Activated CD8-positive, alpha-beta T cell treated with anti-CD3 and anti-CD28 coated beads for 36 hours (primary cell): ENCODE measurements at regions of chr11 and their contacts with region 1.

Region 1: DNA sequence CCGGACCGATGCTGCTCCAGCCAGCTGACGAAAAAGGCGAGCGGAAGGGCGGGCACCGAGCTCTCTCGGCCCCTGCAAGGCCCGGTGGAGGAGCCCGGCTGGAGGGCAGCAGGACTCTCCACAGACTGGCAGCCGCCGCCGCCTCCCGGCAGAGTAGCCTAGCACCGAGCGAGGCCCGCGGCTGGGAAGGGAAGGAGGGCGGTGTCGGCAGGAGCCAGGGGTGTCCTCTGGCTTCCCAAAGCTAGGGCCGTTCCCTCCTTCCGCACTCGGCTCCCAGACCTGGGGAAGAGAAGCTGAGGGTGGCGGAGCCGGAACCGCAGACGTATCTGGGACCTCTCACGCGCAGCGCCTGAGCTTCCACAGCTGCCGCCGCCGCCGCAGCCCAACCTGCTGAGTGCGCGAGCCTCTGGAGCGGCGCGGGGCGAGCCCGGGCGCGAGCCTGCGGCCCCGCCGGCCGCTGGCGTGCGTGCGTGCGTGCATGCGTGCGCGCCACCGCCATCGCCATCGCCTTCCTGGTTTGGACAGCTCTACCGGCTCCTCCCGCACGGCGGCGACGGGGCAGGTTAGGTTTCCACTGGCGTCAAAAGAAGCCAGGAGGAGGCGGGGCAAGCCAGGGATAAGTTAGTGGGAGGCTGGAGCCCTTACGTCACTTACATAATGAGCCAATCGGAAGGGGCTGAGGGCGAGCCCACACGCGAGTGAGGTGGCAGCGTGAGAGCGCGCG is at the start of gene RAB6A:
- DNase-seq: peak; percentile 100
- ATAC-seq: peak; percentile 94
- H3K4me3 Mint-ChIP-seq: peak within 1 kb of the TSS; percentile 87
- H3K27ac Mint-ChIP-seq: peak within 1 kb of the TSS; percentile 94
- H3K4me1 Mint-ChIP-seq: peaks cover 23% of the 10 kb centered on the region
- H3K27me3 Mint-ChIP-seq: no peaks in the 10 kb centered on the region
- CTCF ChIP-seq: no peak
- total RNA-seq, gene RAB6A: 75.3 to 77.6 TPM

Region 2: DNA sequence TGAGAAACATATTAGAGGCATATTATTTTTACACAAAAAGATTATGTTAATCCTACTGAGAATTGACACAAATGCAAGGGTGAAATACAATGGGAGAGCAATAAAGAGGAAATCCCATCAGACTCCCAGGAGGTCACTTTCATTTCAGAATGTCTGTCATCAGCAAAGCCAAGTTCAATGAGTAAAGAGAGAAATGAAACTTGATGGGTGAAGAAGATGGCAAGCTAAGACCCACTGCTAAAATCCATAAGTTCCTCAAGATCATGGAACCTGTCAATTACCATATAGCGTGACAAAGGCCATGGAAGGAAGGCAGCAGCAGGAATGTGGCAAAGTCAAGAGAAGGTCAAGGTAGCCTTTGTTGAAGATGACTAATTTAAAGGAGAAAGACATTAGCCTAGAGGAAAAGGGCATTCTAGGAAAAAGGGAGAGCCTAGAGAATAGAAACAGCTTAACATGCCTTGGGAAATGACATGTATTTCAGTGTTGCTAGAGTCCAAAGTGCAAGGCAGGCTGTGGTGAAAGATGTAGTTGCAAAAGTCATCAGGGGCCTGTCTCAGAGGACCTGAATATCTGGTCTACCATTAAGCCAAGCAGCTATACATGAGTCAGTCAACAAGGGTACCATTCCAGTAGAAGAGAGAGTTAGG is 206.0 kb before region 1 on chr11:
- CTCF ChIA-PET with region 1: no interaction called
- POLR2A ChIA-PET with region 1: no interaction called
- intact Hi-C with region 1: no loop called
- DNase-seq: no peak
- ATAC-seq: no peak
- H3K4me3 Mint-ChIP-seq: no peak overlapping the region
- H3K27ac Mint-ChIP-seq: no peak overlapping the region
- H3K4me1 Mint-ChIP-seq: peaks cover 21% of the 10 kb centered on the region
- H3K27me3 Mint-ChIP-seq: no peaks in the 10 kb centered on the region
- CTCF ChIP-seq: no peak

Region 3: DNA sequence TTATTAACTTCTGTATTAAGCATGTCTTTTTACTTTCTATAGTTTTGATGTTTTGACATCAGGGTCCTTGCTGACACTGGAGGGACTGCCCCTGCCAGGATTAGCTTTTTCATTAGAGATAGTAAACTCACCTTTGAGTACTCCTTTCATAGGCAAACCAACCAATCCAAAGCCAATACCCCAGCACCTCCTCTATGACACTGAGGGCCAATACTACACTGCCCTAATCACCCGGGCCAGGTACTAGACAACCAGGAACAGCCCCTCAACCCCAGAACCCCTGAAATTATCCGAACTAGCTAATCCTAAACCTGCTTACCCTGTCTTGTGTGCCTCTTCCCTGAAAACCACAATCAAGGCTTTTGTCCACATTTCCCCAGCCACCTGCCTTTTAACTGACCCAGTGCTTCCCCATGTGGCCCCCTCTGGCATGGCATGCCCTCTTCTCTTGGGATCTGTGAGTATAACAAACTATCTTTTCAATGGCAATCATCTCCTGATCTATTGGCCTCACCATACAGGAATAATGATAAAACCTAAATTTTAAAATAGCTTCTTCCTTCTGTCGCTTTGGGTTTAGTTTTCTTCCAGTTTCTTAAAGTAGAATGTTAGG is 31.1 kb before region 1 on chr11:
- CTCF ChIA-PET with region 1: no interaction called
- POLR2A ChIA-PET with region 1: no interaction called
- intact Hi-C with region 1: no loop called
- DNase-seq: peak; percentile 38
- ATAC-seq: peak; percentile 55
- H3K4me3 Mint-ChIP-seq: no peak overlapping the region
- H3K27ac Mint-ChIP-seq: peak overlapping the region; percentile 25
- H3K4me1 Mint-ChIP-seq: peaks cover 40% of the 10 kb centered on the region
- H3K27me3 Mint-ChIP-seq: no peaks in the 10 kb centered on the region
- CTCF ChIP-seq: peak; percentile 59

Region 4: GRCh38 chr11:73779084-73779902 is 18.5 kb after region 1 on chr11:
- CTCF ChIA-PET with region 1: interaction called, 8 read pairs
- POLR2A ChIA-PET with region 1: interaction called, 26 read pairs
- intact Hi-C with region 1: loop called (anchors 1 kb)
- DNase-seq: peak; percentile 99
- ATAC-seq: peak; percentile 98
- H3K4me3 Mint-ChIP-seq: peak overlapping the region; percentile 90
- H3K27ac Mint-ChIP-seq: peak overlapping the region; percentile 99
- H3K4me1 Mint-ChIP-seq: peaks cover 10% of the 10 kb centered on the region
- H3K27me3 Mint-ChIP-seq: no peaks in the 10 kb centered on the region
- CTCF ChIP-seq: no peak

Region 5: DNA sequence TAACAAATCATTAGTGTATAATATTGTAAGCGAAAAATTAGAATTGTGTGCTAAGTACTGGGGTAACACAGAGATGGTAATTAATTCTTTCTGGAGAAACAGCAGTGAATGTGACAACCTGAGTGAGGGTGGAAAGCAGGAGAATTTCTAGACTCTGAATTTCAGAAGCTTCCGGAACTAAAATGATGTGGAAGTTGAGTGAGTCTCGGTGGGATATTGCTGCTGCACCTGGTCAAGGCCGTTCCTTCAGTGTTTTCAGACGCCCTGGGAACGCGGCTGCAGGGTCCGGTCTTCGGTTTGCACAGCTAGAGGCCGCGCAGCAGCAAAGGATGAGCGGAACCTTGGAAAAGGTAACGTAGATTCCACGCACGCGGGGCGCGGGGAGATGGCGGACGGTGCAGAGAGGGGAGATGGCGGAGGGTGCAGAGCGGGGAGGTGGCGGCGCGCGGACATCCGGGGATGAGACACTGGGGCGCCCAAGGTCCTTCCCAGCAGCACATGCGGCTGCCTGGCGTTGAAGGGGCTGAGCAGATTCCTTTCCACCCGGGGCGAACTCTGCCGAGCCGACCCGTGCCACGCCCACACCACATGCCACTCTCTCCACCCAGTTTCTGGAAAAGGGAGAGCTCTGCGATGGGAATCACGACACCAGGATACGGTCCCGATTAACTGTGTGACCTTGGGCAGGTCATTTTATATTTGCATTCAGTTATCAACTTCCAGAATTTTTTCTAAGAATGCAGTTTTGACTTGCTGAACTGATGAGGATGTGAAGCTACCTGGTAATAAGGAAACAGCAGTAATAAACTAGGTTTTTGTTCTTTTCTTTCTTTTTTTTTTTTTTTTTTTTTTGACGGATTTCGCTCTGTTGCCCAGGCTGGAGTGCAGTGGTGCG is 27.0 kb after region 1 on chr11 and contains the start of gene MRPL48:
- CTCF ChIA-PET with region 1: interaction called, 8 read pairs
- POLR2A ChIA-PET with region 1: interaction called, 24 read pairs
- intact Hi-C with region 1: no loop called
- DNase-seq: peak; percentile 95
- ATAC-seq: peak; percentile 99
- H3K4me3 Mint-ChIP-seq: peak within 1 kb of the TSS; percentile 99
- H3K27ac Mint-ChIP-seq: peak within 1 kb of the TSS; percentile 99
- H3K4me1 Mint-ChIP-seq: peaks cover 17% of the 10 kb centered on the region
- H3K27me3 Mint-ChIP-seq: no peaks in the 10 kb centered on the region
- CTCF ChIP-seq: no peak
- total RNA-seq, gene MRPL48: 41.3 to 44.9 TPM

Region 6: DNA sequence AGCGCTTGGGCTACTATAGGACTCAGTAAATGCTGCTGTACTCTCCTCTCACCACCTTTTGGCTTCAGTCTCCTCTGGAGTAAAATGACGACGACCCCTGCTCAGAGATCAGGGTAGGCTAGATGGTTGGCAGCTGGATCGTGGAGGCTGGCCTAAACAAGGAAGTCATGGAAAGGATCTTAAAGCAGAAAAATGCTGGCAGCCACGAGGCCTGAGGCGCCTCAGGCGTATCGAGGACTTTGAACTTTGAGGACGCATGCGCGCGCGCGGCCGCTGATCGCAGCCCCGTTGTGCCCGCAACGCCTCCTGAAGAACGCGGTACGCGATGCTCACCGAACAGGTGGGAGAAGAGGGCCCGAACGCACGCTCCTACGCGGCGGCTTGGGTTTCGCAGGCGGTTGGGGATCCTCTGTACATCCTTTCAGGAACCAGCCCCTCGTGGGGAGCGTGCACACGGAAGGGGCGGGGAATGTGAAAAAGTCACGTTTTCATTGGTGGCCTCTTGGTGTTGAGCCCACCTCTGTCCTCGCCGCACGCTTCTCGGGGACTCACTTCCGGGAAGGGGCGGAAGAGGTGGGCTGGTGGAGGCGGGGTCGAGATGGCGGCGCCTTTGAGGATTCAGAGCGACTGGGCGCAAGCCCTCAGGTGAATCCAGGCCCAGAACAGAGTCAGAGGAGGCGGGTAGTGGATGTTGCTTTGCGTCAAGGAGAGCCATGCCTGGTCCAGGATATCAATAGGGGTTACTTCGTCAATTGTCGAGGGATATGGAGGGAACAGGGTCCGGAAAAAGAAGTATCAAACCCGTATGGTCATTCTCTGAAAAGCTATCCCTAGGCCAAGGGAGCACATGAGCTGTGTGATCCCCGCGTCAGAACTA is 115.8 kb after region 1 on chr11 and contains the starts of genes COA4 and PAAF1:
- CTCF ChIA-PET with region 1: no interaction called
- POLR2A ChIA-PET with region 1: interaction called, 6 read pairs
- intact Hi-C with region 1: loop called (anchors 10 kb)
- DNase-seq: peak; percentile 97
- ATAC-seq: peak; percentile 97
- H3K4me3 Mint-ChIP-seq: peak within 1 kb of the TSS; percentile 98
- H3K27ac Mint-ChIP-seq: peak within 1 kb of the TSS; percentile 100
- H3K4me1 Mint-ChIP-seq: peaks cover 29% of the 10 kb centered on the region
- H3K27me3 Mint-ChIP-seq: no peaks in the 10 kb centered on the region
- CTCF ChIP-seq: no peak
- total RNA-seq, gene COA4: 106 to 116 TPM
- total RNA-seq, gene PAAF1: 32.5 to 34.9 TPM